ENCODE measurements at regions of chr20 and their contacts with region 1.

Region 1: DNA sequence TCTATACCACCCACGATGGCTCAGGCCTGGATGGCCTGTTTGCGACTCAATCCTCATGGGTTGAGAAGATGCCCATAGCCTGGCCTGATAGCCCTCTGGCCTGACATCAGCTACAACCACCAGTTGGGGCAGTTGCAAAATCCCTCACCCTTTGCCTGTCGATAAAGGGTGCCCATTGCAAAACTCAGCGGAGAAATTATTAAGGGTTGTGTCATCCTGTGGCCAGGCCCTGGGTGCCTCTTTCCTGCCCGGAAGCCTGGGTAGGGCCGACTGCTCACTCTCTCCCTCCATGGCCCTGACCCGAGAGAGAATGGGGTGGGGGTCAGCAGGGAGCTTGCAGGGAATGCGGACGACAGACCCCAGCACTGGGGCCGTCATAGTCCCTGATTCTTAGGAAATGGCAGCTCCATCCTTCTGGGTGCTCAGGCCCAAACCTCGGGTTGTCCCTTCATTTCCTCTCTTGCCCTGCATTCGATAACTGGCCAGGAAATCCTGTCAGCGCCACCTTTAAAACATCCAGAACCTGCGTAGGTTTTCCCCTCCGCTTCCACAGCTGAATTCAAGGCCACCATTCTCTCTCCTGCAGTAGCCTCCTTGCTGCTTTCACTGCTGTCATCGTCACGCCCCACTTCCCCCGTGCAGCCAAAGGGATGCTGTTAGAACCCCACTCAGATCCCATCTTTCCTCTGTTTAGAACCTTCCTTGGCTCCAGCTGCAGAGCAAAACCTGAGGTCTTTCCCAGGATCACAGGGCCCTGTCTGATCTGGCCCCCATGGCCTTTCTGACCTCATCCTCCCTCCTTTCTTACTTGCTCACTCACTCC is 31.1 kb downstream of the CEBPB start:
- DNase-seq: peak; percentile 64
- H3K4me3 Mint-ChIP-seq: no peak overlapping the region
- H3K27ac Mint-ChIP-seq: no peak overlapping the region
- H3K4me1 Mint-ChIP-seq: peaks cover 54% of the 10 kb centered on the region
- H3K27me3 Mint-ChIP-seq: no peaks in the 10 kb centered on the region
- CTCF ChIP-seq: no peak

Region 2: GRCh38 chr20:50198180-50198666 is 23.5 kb before region 1 on chr20:
- CTCF ChIA-PET with region 1: interaction called, 3 read pairs
- intact Hi-C with region 1: loop called (anchors 1 kb)
- DNase-seq: no peak
- H3K4me3 Mint-ChIP-seq: no peak overlapping the region
- H3K27ac Mint-ChIP-seq: no peak overlapping the region
- H3K4me1 Mint-ChIP-seq: peaks cover 37% of the 10 kb centered on the region
- H3K27me3 Mint-ChIP-seq: no peaks in the 10 kb centered on the region
- CTCF ChIP-seq: no peak

Region 3: DNA sequence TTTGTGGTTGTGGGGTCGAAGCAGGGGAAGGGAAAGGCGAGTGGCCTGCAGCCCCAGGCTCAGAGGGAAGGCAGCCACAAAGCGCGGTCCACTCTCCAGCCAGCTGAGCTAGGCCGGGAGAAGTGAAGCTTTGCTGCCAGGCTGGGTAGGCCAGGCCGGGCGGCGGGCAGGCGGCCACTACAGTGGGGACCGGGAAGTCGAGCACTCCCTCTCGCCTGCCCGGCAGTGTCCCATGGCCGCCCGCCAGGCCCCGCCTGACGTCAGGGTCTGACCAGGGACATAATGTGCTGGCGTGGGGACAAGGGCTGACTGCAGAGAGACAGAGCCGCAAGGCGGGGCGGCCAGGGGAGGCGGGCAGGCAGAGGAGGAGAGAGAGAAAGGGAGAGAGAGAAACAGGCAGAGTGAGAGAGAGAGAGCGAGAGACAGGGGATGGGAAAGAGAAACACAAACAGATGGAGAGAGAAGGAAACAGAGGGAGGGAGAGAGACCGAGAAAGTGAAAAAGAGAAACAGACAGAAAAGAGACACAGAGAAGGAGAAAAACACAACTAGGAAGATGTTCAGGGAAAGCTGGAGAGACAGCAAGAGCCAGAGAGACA is 193.9 kb after region 1 on chr20:
- CTCF ChIA-PET with region 1: no interaction called
- intact Hi-C with region 1: no loop called
- DNase-seq: peak; percentile 99
- H3K4me3 Mint-ChIP-seq: peak overlapping the region; percentile 29
- H3K27ac Mint-ChIP-seq: peak overlapping the region; percentile 93
- H3K4me1 Mint-ChIP-seq: peaks cover 55% of the 10 kb centered on the region
- H3K27me3 Mint-ChIP-seq: no peaks in the 10 kb centered on the region
- CTCF ChIP-seq: no peak

Measured in Calu3 (cell line).